ENCODE measurements at regions of chr12 and their contacts with region 1.

Region 1: DNA sequence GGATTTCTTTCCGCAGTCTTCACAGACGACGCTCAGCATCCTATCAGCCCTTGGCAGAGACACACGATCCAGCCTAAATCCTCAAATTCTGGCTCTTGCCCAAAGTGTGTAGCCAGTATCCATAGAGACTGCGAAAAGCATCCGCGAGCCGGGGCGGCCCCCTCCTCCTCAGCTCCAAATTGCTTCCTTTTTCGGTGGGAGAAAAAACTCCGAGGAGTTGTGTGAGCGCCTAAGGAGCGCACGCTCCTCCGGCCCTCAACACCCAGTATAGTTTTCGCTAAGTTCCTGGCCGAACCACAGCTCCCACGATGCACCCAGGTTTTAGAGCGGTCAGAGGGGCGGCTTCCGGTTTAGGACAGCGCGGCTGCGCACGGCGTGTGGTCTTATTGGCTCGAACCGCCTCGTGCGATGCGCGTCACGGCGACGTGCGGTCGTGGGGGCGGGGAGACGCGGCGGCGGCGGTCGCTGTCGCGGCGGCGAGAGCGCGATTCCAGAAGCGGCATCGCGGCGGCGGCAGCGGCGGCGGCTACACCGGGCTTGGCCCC is at the start of gene ADIPOR2:
- DNase-seq: peak; percentile 97
- ATAC-seq: peak; percentile 94
- H3K4me3 ChIP-seq: peak within 1 kb of the TSS; percentile 51 to 91 (median 78)
- H3K4me3 Mint-ChIP-seq: peak within 1 kb of the TSS; percentile 86
- H3K27ac ChIP-seq: peak within 1 kb of the TSS; percentile 81 to 97
- H3K27ac Mint-ChIP-seq: peak within 1 kb of the TSS; percentile 96
- H3K4me1 ChIP-seq: peaks cover 28 to 30% of the 10 kb centered on the region in 2 donors
- H3K4me1 Mint-ChIP-seq: peaks cover 36% of the 10 kb centered on the region
- H3K27me3 ChIP-seq: no peaks in the 10 kb centered on the region
- H3K27me3 Mint-ChIP-seq: peaks cover 6% of the 10 kb centered on the region
- CTCF ChIP-seq: no peak
- total RNA-seq, gene ADIPOR2: 35.9 and 38.9 TPM in 2 replicates

Region 2: GRCh38 chr12:401235-402028 is 1289.2 kb before region 1 on chr12 and contains the start of gene CCDC77:
- CTCF ChIA-PET with region 1: no interaction called
- POLR2A ChIA-PET with region 1: no interaction called
- intact Hi-C with region 1: loop called (anchors 5 kb)
- DNase-seq: peak; percentile 97
- ATAC-seq: peak; percentile 100
- H3K4me3 ChIP-seq: peak within 1 kb of the TSS; percentile 76 to 89 (median 82)
- H3K4me3 Mint-ChIP-seq: no peak within 1 kb of the TSS
- H3K27ac ChIP-seq: peak within 1 kb of the TSS; percentile 53 to 76
- H3K27ac Mint-ChIP-seq: no peak within 1 kb of the TSS
- H3K4me1 ChIP-seq: peaks cover 11 to 14% of the 10 kb centered on the region in 2 donors
- H3K4me1 Mint-ChIP-seq: no peaks in the 10 kb centered on the region
- H3K27me3 ChIP-seq: no peaks in the 10 kb centered on the region
- H3K27me3 Mint-ChIP-seq: no peaks in the 10 kb centered on the region
- CTCF ChIP-seq: peak; percentile 21
- total RNA-seq, gene CCDC77: 12.9 and 18.5 TPM in 2 replicates

Region 3: DNA sequence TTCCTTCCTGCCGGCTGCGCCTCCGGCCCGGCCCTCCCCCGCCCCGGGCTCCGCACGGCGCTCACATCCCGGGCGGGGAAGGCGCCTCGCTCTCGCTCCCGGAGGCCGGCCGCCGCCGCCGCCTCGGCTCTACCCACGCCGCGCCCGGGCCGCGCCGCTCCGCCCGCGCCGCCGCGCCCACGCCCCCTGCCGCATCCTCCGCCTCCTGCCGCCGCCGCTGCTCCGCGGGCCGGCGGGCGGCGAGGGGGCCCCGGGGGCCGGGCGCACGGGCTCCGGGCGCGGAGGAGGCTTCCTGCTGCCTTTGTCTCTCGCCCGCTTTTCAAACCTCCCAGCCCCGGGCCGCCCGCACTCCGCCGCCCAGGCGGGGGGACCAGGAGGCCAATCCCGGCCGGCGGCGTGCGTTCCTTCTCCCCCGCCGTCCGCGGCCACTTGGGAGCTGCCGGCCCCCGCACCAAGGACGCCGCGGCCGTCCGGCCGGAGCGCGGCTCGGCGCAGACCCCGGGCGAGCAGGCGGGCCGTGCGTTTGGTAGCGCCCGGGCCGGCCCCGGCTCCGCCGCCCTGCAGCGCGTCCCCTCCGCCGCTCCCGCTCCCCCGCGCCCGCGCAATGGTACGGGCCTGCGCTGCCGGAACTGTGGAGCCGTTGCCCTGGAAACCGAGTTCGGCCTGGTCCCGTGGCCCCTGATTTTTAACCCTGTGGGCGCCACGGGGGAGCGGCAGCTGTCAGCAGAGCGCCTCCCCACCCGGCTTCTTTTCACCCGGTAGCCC is 96.2 kb before region 1 on chr12 and contains the start of gene FBXL14:
- CTCF ChIA-PET with region 1: no interaction called
- POLR2A ChIA-PET with region 1: no interaction called
- intact Hi-C with region 1: loop called (anchors 5 kb)
- DNase-seq: peak; percentile 95
- ATAC-seq: peak; percentile 65
- H3K4me3 ChIP-seq: peak within 1 kb of the TSS; percentile 59 to 81 (median 73)
- H3K4me3 Mint-ChIP-seq: peak within 1 kb of the TSS; percentile 94
- H3K27ac ChIP-seq: peak within 1 kb of the TSS; percentile 80 to 96
- H3K27ac Mint-ChIP-seq: peak within 1 kb of the TSS; percentile 97
- H3K4me1 ChIP-seq: peaks cover 38 to 41% of the 10 kb centered on the region in 2 donors
- H3K4me1 Mint-ChIP-seq: peaks cover 50% of the 10 kb centered on the region
- H3K27me3 ChIP-seq: no peaks in the 10 kb centered on the region
- H3K27me3 Mint-ChIP-seq: no peaks in the 10 kb centered on the region
- CTCF ChIP-seq: no peak
- total RNA-seq, gene FBXL14: 33.9 and 37.3 TPM in 2 replicates

Region 4: DNA sequence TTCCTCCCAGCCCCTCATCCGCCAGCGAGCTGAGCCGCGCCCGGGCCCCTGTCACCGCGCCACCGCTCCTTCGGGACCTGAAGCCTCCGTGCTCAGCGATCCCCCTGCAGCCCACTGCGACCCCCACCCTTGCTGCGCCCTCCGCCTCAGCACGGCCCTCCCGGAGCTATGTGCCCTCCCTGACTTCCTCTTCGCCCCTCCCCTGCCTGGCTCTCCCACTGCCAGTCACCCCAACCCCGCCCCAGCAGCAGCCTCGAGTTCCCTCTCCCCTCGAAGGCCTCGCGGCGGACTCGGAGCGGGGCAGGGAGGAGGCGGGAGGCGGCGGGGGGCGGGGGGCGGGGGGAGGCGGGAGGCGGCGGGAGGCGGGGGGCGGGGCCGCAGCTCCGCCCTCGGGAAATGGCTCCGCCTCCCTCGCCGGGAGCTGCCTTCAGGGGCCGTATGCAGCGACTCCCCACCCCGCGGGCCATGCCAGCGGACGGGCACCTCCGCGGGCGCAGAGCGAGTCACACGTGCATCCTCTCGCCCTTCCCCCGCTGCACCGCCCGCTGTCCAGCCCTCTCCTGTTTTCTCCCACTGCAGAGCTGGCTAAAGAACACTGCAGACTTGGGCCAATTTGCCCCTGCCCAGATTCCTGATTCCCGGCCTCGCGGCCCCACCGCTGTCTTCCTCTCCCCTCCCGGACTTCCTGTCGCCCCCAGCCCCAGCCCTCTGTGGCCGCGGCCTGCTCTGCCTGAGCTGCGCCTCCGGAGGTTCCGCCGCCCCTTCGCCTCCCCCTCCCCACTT is 28.9 kb before region 1 on chr12:
- CTCF ChIA-PET with region 1: interaction called, 23 read pairs
- POLR2A ChIA-PET with region 1: interaction called, 7 read pairs
- intact Hi-C with region 1: loop called (anchors 2 kb)
- DNase-seq: peak; percentile 84
- ATAC-seq: peak; percentile 90
- H3K4me3 ChIP-seq: peak overlapping the region in 4 of 5 experiments; percentile 54 to 71 (median 63)
- H3K4me3 Mint-ChIP-seq: peak overlapping the region; percentile 86
- H3K27ac ChIP-seq: peak overlapping the region in 1 of 2 donors; percentile 18
- H3K27ac Mint-ChIP-seq: peak overlapping the region; percentile 88
- H3K4me1 ChIP-seq: peaks cover 0 to 1% of the 10 kb centered on the region in 2 donors
- H3K4me1 Mint-ChIP-seq: peaks cover 18% of the 10 kb centered on the region
- H3K27me3 ChIP-seq: no peaks in the 10 kb centered on the region
- H3K27me3 Mint-ChIP-seq: no peaks in the 10 kb centered on the region
- CTCF ChIP-seq: no peak

Region 5: DNA sequence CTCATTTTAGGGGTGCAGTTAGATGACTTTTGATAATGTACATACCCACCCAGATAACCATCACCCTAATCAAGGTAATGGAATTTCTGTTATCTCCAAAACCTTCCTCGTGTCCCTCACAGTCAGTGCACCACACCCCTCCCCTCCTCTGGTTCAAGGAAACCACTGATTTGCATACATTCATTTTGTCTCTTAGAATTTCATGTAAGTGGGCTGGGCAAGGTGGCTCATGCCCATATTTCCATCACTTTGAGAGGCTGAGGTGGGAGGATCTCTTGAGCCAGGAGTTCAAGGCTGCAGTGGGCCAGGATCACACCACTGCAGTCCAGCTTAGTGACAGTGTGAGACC is 16.0 kb after region 1 on chr12:
- CTCF ChIA-PET with region 1: no interaction called
- POLR2A ChIA-PET with region 1: no interaction called
- intact Hi-C with region 1: no loop called
- DNase-seq: no peak
- ATAC-seq: no peak
- H3K4me3 ChIP-seq: no peak overlapping the region
- H3K4me3 Mint-ChIP-seq: no peak overlapping the region
- H3K27ac ChIP-seq: no peak overlapping the region
- H3K27ac Mint-ChIP-seq: no peak overlapping the region
- H3K4me1 ChIP-seq: peaks cover 6 to 7% of the 10 kb centered on the region in 2 donors
- H3K4me1 Mint-ChIP-seq: peaks cover 36% of the 10 kb centered on the region
- H3K27me3 ChIP-seq: no peaks in the 10 kb centered on the region
- H3K27me3 Mint-ChIP-seq: no peaks in the 10 kb centered on the region
- CTCF ChIP-seq: no peak

Region 6: GRCh38 chr12:1939801-1940607 is 249.4 kb after region 1 on chr12:
- CTCF ChIA-PET with region 1: interaction called, 10 read pairs
- POLR2A ChIA-PET with region 1: no interaction called
- intact Hi-C with region 1: no loop called
- DNase-seq: peak; percentile 89
- ATAC-seq: peak; percentile 97
- H3K4me3 ChIP-seq: no peak overlapping the region
- H3K4me3 Mint-ChIP-seq: no peak overlapping the region
- H3K27ac ChIP-seq: no peak overlapping the region
- H3K27ac Mint-ChIP-seq: peak overlapping the region; percentile 10
- H3K4me1 ChIP-seq: peaks cover 4 to 5% of the 10 kb centered on the region in 2 donors
- H3K4me1 Mint-ChIP-seq: peaks cover 5% of the 10 kb centered on the region
- H3K27me3 ChIP-seq: no peaks in the 10 kb centered on the region
- H3K27me3 Mint-ChIP-seq: no peaks in the 10 kb centered on the region
- CTCF ChIP-seq: peak; percentile 99

Measured in B cell (primary cell).